PC-3 (cell line): ENCODE measurements at regions of chr21 and their contacts with region 1.

Region 1: GRCh38 chr21:32083197-32083596 is 195.7 kb downstream of the MIS18A start:
- DNase-seq: no peak
- ATAC-seq: no peak
- H3K4me3 ChIP-seq: no peak overlapping the region
- H3K27ac ChIP-seq: no peak overlapping the region
- H3K4me1 ChIP-seq: no peaks in the 10 kb centered on the region
- H3K27me3 ChIP-seq: peaks cover 64% of the 10 kb centered on the region
- CTCF ChIP-seq: no peak

Region 2: DNA sequence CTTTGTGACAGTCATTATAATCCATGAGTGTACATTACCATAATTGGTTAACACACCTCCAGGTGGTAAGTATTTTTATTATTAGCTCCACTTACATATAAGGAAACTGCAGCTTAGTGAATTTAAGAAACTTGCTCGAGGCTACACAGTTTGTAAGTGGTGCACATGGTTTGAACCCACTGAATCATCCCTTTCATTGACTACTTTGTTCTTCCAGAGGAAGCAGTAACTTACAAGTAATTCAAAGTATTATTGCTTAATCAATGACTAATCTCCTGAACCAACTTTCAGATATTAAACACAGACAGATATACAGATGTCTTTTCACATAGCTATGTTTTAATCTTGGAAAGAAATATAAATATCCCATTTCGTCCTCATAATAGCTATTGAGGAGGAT is 1848.6 kb before region 1 on chr21:
- CTCF ChIA-PET with region 1: no interaction called
- POLR2A ChIA-PET with region 1: interaction called, 29 read pairs
- intact Hi-C with region 1: no loop called
- DNase-seq: peak; percentile 81
- ATAC-seq: no peak
- H3K4me3 ChIP-seq: no peak overlapping the region
- H3K27ac ChIP-seq: peak overlapping the region; percentile 66
- H3K4me1 ChIP-seq: peaks cover 21% of the 10 kb centered on the region
- H3K27me3 ChIP-seq: no peaks in the 10 kb centered on the region
- CTCF ChIP-seq: no peak